ENCODE measurements at regions of chr11 and their contacts with region 1.

Region 1: GRCh38 chr11:13329670-13330356 is 52.2 kb downstream of the BMAL1 start:
- DNase-seq: peak in 2 of 5 donors; percentile 46 to 56
- ATAC-seq: peak; percentile 87 to 96 (median 90)
- H3K4me3 ChIP-seq: no peak overlapping the region
- H3K27ac ChIP-seq: peak overlapping the region in 5 of 12 donors; percentile 8 to 47 (median 30)
- H3K4me1 ChIP-seq: peaks cover 0 to 71% (median 28%) of the 10 kb centered on the region in 12 donors
- H3K27me3 ChIP-seq: no peaks in the 10 kb centered on the region
- CTCF ChIP-seq: no peak
- POLR2A ChIP-seq: no peak

Region 2: GRCh38 chr11:13304655-13305335 is 25.0 kb before region 1 on chr11:
- intact Hi-C with region 1: loop called in 1 of 10 experiments (anchors 1 kb)
- DNase-seq: peak in 3 of 5 donors; percentile 34 to 50 (median 37)
- ATAC-seq: peak; percentile 61 to 85 (median 72)
- H3K4me3 ChIP-seq: peak overlapping the region in 2 of 12 donors; percentile 18 to 24
- H3K27ac ChIP-seq: peak overlapping the region in 10 of 12 donors; percentile 45 to 75 (median 60)
- H3K4me1 ChIP-seq: peaks cover 13 to 64% (median 33%) of the 10 kb centered on the region in 12 donors
- H3K27me3 ChIP-seq: no peaks in the 10 kb centered on the region
- CTCF ChIP-seq: no peak
- POLR2A ChIP-seq: no peak

Measured in heart left ventricle (tissue), 16 donors.